ENCODE measurements at regions of chr7 and their contacts with region 1.

Region 1: GRCh38 chr7:1175967-1176851 is 16.2 kb upstream of the ZFAND2A start:
- DNase-seq: peak; percentile 26
- ATAC-seq: peak; percentile 95
- H3K4me3 ChIP-seq: peak overlapping the region; percentile 19; the same call in 1 of the 2 replicates
- H3K27ac ChIP-seq: no peak overlapping the region
- H3K4me1 ChIP-seq: no peaks in the 10 kb centered on the region
- H3K27me3 ChIP-seq: no peaks in the 10 kb centered on the region
- CTCF ChIP-seq: peak; percentile 85 to 96 (median 95)
- EP300 ChIP-seq: no peak
- POLR2A ChIP-seq: 0 out of 2 replicates have a peak, but pooled peaks have one; percentile 37
- RAD21 ChIP-seq: peak; percentile 64

Region 2: GRCh38 chr7:964401-965231 is 211.6 kb before region 1 on chr7:
- CTCF ChIA-PET with region 1: no interaction called
- POLR2A ChIA-PET with region 1: no interaction called
- RAD21 ChIA-PET with region 1: no interaction called
- SMC1A ChIA-PET with region 1: no interaction called
- in situ Hi-C with region 1: no loop called
- intact Hi-C with region 1: no loop called
- DNase-seq: no peak
- ATAC-seq: peak; percentile 47
- H3K4me3 ChIP-seq: no peak overlapping the region
- H3K27ac ChIP-seq: no peak overlapping the region
- H3K4me1 ChIP-seq: peaks cover 8% of the 10 kb centered on the region
- H3K27me3 ChIP-seq: no peaks in the 10 kb centered on the region
- CTCF ChIP-seq: no peak
- EP300 ChIP-seq: no peak
- POLR2A ChIP-seq: peak; percentile 59
- RAD21 ChIP-seq: no peak

Region 3: DNA sequence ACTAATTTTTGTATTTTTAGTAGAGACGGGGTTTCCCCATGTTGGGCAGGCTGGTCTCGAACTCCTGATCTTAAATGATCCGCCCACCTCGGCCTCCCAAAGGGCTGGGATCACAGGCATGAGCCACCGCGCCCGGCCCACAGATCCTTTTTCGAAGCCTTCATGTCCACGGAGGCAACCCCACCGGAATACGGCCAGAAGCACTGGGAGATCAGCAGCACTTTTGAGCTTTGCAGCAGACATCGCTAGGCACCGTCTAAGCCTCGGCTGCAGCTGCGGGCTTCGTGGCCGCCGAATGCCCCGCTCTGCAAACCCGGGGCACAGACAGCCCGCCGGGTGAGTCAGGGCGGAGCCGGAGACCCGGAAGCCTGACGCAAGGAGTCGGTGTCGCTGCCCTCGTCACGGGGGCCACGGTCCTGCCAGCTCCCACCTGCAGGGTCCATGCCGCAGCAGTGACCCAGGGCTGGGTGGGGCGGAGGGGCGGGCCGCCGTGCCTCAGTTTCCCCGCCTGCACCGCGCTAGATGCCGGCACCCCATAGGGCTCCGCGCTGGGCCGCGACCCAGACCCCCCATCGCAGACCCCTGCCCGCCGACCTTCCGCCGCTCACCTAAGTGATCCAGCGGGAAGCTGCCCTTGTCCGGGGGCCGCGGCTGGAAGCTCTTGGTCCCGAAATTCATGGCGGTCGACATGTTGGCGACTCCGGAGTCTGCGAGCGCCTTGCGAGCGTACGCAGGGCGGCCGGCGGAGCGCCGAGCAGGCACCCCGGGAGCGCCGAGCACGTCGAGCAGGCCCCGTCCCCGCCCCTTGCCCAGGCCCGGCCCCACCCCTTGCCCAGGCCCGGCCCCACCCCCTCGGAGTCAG is 201.2 kb before region 1 on chr7 and contains the start of gene COX19:
- CTCF ChIA-PET with region 1: interaction called, 16 read pairs
- POLR2A ChIA-PET with region 1: no interaction called
- RAD21 ChIA-PET with region 1: no interaction called
- SMC1A ChIA-PET with region 1: interaction called, 12 read pairs
- in situ Hi-C with region 1: no loop called
- intact Hi-C with region 1: no loop called
- DNase-seq: peak; percentile 42
- ATAC-seq: peak; percentile 87
- H3K4me3 ChIP-seq: peak within 1 kb of the TSS; percentile 78
- H3K27ac ChIP-seq: peak within 1 kb of the TSS; percentile 86
- H3K4me1 ChIP-seq: no peaks in the 10 kb centered on the region
- H3K27me3 ChIP-seq: no peaks in the 10 kb centered on the region
- CTCF ChIP-seq: no peak
- EP300 ChIP-seq: no peak
- POLR2A ChIP-seq: peak; percentile 94
- RAD21 ChIP-seq: no peak
- polyA plus RNA-seq, gene COX19: 3.7 to 6.6 TPM

Region 4: GRCh38 chr7:1096156-1097119 is 79.8 kb before region 1 on chr7:
- CTCF ChIA-PET with region 1: interaction called, 16 read pairs
- POLR2A ChIA-PET with region 1: no interaction called
- RAD21 ChIA-PET with region 1: interaction called, 3 read pairs
- SMC1A ChIA-PET with region 1: no interaction called
- in situ Hi-C with region 1: no loop called
- intact Hi-C with region 1: no loop called
- DNase-seq: no peak
- ATAC-seq: no peak
- H3K4me3 ChIP-seq: no peak overlapping the region
- H3K27ac ChIP-seq: no peak overlapping the region
- H3K4me1 ChIP-seq: peaks cover 5% of the 10 kb centered on the region
- H3K27me3 ChIP-seq: no peaks in the 10 kb centered on the region
- CTCF ChIP-seq: no peak
- EP300 ChIP-seq: no peak
- POLR2A ChIP-seq: no peak
- RAD21 ChIP-seq: no peak

Region 5: GRCh38 chr7:1103009-1103788 is 73.0 kb before region 1 on chr7:
- CTCF ChIA-PET with region 1: interaction called, 22 read pairs
- POLR2A ChIA-PET with region 1: interaction called, 4 read pairs
- RAD21 ChIA-PET with region 1: interaction called, 4 read pairs
- SMC1A ChIA-PET with region 1: interaction called, 3 read pairs
- in situ Hi-C with region 1: no loop called
- intact Hi-C with region 1: no loop called
- DNase-seq: peak; percentile 73
- ATAC-seq: peak; percentile 79
- H3K4me3 ChIP-seq: peak overlapping the region; percentile 64
- H3K27ac ChIP-seq: peak overlapping the region; percentile 70
- H3K4me1 ChIP-seq: peaks cover 33% of the 10 kb centered on the region
- H3K27me3 ChIP-seq: no peaks in the 10 kb centered on the region
- CTCF ChIP-seq: no peak
- EP300 ChIP-seq: peak; percentile 38 to 78; a peak in 3 of 4 replicates
- POLR2A ChIP-seq: peak; percentile 62; the same call in 1 of the 2 replicates
- RAD21 ChIP-seq: no peak

Region 6: GRCh38 chr7:1137510-1138167 is 38.6 kb before region 1 on chr7:
- CTCF ChIA-PET with region 1: interaction called, 22 read pairs
- POLR2A ChIA-PET with region 1: interaction called, 7 read pairs
- RAD21 ChIA-PET with region 1: interaction called, 7 read pairs
- SMC1A ChIA-PET with region 1: interaction called, 4 read pairs
- in situ Hi-C with region 1: no loop called
- intact Hi-C with region 1: no loop called
- DNase-seq: no peak
- ATAC-seq: peak; percentile 85
- H3K4me3 ChIP-seq: peak overlapping the region; percentile 83
- H3K27ac ChIP-seq: peak overlapping the region; percentile 46
- H3K4me1 ChIP-seq: no peaks in the 10 kb centered on the region; the same call in 1 of the 2 replicates
- H3K27me3 ChIP-seq: no peaks in the 10 kb centered on the region
- CTCF ChIP-seq: no peak
- EP300 ChIP-seq: no peak; a peak in 1 of 4 replicates
- POLR2A ChIP-seq: no peak
- RAD21 ChIP-seq: no peak

Region 7: DNA sequence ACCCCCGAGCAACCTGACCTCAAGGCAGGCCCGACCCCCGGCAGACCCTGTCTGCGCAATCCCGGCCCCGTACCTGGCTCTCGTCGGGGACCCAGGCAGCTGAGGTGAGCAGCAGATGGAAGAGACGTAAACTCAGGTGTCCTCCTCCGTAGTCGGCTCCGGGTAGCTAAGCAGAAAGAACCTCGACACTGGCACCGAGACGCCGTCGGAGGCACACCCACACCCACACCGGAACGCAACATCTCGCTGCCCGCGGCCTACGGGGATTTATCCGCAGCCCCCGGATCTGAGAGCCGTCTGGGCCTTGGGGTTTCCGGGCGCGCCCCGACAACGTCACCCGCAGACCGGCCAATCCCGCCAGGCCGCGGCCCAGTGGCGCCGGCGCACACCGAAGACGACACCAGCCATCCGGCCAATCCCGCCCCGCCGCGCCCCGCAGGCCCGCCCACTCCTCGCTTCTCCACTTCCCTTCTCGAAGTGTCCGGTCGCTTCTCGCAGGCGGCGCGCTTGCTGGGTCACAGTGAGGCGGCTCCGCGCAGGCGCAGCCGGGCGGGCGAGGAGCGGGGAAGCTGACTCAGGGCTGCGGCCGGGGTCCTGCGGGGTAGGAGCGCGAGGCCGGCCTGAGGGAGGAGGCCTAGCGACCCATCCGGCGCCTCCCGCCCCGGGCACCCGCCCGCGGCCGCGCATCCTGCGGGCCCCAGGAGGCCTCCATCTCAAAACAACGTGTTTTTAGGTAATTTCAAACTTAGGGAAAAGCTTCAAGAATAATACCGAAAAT is 16.1 kb before region 1 on chr7 and contains the start of gene ZFAND2A:
- CTCF ChIA-PET with region 1: interaction called, 32 read pairs
- POLR2A ChIA-PET with region 1: interaction called, 4 read pairs
- RAD21 ChIA-PET with region 1: no interaction called
- SMC1A ChIA-PET with region 1: interaction called, 5 read pairs
- in situ Hi-C with region 1: no loop called
- intact Hi-C with region 1: no loop called
- DNase-seq: peak; percentile 79
- ATAC-seq: peak; percentile 98
- H3K4me3 ChIP-seq: peak within 1 kb of the TSS; percentile 99
- H3K27ac ChIP-seq: peak within 1 kb of the TSS; percentile 96
- H3K4me1 ChIP-seq: no peaks in the 10 kb centered on the region; the same call in 1 of the 2 replicates
- H3K27me3 ChIP-seq: no peaks in the 10 kb centered on the region
- CTCF ChIP-seq: no peak
- EP300 ChIP-seq: no peak; a peak in 1 of 4 replicates
- POLR2A ChIP-seq: peak; percentile 93
- RAD21 ChIP-seq: no peak
- polyA plus RNA-seq, gene ZFAND2A: 34.9 to 39.9 TPM

Region 8: DNA sequence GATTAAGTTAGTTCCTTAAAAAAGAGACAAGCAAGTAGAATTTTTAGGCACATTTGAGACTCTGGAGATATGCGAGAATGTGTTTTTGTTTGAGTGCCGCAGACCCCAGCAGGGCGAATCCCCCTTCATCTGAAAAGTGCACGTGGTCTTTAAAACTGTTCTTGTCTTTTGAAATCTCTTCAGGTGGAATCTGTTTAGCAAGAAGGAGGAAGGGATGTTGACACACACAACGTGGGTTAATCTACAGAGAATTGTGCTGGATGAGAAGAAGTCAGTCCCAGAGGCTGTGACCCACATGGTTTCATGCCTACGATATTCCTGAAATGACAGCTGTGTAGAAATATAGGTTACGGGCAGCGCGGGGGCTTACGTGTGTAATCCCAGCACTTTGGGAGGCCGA is 10.9 kb after region 1 on chr7:
- CTCF ChIA-PET with region 1: interaction called, 11 read pairs
- POLR2A ChIA-PET with region 1: no interaction called
- RAD21 ChIA-PET with region 1: no interaction called
- SMC1A ChIA-PET with region 1: interaction called, 3 read pairs
- in situ Hi-C with region 1: no loop called
- intact Hi-C with region 1: no loop called
- DNase-seq: no peak
- ATAC-seq: no peak
- H3K4me3 ChIP-seq: no peak overlapping the region
- H3K27ac ChIP-seq: no peak overlapping the region
- H3K4me1 ChIP-seq: no peaks in the 10 kb centered on the region
- H3K27me3 ChIP-seq: peaks cover 0 to 2% of the 10 kb centered on the region in 2 experiments; a peak in 1 of 4 replicates
- CTCF ChIP-seq: no peak
- EP300 ChIP-seq: no peak
- POLR2A ChIP-seq: no peak
- RAD21 ChIP-seq: no peak

Region 9: DNA sequence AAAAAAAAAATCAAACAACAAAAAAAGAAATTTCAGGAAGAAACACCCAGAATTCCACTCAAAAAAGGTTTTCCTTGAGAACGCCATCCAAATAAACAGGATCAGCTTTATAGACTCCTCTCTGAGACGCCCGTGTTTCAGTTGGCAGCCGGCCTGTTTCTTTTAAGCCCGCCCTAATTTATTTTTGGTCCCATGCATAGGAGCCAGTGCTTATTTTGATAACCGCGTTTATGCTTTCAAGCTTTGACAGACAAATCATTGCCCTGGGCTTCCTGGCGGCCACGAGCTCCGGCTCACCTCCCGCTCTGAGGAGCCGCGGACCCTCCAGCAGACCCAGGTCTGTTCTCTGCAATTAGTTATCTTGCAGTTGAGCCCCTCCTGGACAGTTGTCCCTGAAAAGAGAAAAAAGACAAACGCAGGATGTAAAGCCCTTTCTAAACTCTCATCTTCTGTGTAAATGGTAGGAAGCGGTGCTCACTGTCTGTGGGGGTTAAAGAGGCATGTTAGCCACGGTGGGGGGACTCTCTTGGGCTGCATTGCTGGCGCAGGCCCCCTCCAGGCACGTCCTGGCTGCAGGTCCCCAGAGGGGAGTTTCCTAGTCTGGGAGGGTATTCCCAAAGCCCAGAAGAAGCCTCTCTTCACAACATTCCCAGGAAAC is 34.2 kb after region 1 on chr7:
- CTCF ChIA-PET with region 1: no interaction called
- POLR2A ChIA-PET with region 1: no interaction called
- RAD21 ChIA-PET with region 1: no interaction called
- SMC1A ChIA-PET with region 1: no interaction called
- in situ Hi-C with region 1: no loop called
- intact Hi-C with region 1: no loop called
- DNase-seq: no peak
- ATAC-seq: no peak
- H3K4me3 ChIP-seq: no peak overlapping the region
- H3K27ac ChIP-seq: no peak overlapping the region
- H3K4me1 ChIP-seq: no peaks in the 10 kb centered on the region
- H3K27me3 ChIP-seq: 0 out of 4 replicates have a peak, but pooled peaks cover 0 to 1% of the 10 kb centered on the region in 2 experiments
- CTCF ChIP-seq: no peak
- EP300 ChIP-seq: no peak
- POLR2A ChIP-seq: no peak
- RAD21 ChIP-seq: no peak

Region 10: GRCh38 chr7:1397491-1398327 is 221.5 kb after region 1 on chr7:
- CTCF ChIA-PET with region 1: no interaction called
- POLR2A ChIA-PET with region 1: no interaction called
- RAD21 ChIA-PET with region 1: no interaction called
- SMC1A ChIA-PET with region 1: no interaction called
- in situ Hi-C with region 1: no loop called
- intact Hi-C with region 1: no loop called
- DNase-seq: no peak
- ATAC-seq: no peak
- H3K4me3 ChIP-seq: no peak overlapping the region
- H3K27ac ChIP-seq: no peak overlapping the region
- H3K4me1 ChIP-seq: no peaks in the 10 kb centered on the region
- H3K27me3 ChIP-seq: 0 out of 4 replicates have a peak, but pooled peaks cover 0 to 1% of the 10 kb centered on the region in 2 experiments
- CTCF ChIP-seq: no peak
- EP300 ChIP-seq: no peak
- POLR2A ChIP-seq: no peak
- RAD21 ChIP-seq: no peak

Measured in GM12878 (cell line).